CD4-positive, alpha-beta memory T cell (primary cell): ENCODE measurements at regions of chrX and their contacts with region 1.

Region 1: DNA sequence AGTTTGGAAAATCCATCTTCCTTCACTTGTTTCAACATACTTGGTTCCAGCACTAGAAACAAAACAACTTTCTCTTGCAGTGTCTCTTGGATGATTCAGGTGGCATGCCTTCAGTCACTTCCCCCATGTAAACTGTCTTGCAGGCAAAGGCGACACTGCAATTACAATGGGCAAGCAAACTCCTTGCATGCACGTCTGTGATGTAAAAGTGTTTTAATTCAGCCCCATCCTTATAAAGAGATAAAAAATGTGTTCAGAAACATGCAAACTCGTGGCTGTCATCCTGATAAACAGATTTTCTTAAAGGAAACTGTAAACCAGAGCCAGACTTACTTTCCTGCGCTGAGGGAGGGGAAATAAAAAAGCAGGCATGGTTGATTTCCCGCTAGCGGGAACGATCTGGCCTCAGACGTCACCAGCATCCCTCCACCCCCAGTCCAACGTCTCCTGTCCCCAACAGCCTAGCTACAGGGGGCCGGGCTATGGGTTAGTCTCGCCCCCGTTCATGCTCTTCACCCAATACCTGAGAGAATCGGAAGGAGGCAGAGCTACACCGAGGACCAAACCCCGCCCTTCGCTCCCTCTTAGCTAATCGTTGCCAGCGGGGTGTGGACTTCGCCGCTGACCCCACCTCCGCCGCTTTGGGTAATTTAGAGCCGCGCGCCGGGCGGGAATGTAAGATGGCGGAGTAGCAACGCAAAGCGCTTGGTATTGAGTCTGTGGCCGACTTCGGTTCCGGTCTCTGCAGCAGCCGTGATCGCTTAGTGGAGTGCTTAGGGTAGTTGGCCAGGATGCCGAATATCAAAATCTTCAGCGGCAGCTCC is at the start of gene PRPS1:
- DNase-seq: peak; percentile 84 to 93 (median 89)
- H3K4me3 ChIP-seq: peak within 1 kb of the TSS; percentile 79 to 86
- H3K4me3 Mint-ChIP-seq: peak within 1 kb of the TSS; percentile 85 to 99 (median 95)
- H3K27ac ChIP-seq: peak within 1 kb of the TSS; percentile 73
- H3K27ac Mint-ChIP-seq: peak within 1 kb of the TSS; percentile 94 to 96 (median 95)
- H3K4me1 ChIP-seq: peaks cover 31% of the 10 kb centered on the region
- H3K4me1 Mint-ChIP-seq: peaks cover 16 to 46% (median 29%) of the 10 kb centered on the region in 4 donors
- H3K27me3 ChIP-seq: no peaks in the 10 kb centered on the region
- H3K27me3 Mint-ChIP-seq: no peaks in the 10 kb centered on the region
- total RNA-seq, gene PRPS1: 56.1 to 61.3 TPM

Region 2: DNA sequence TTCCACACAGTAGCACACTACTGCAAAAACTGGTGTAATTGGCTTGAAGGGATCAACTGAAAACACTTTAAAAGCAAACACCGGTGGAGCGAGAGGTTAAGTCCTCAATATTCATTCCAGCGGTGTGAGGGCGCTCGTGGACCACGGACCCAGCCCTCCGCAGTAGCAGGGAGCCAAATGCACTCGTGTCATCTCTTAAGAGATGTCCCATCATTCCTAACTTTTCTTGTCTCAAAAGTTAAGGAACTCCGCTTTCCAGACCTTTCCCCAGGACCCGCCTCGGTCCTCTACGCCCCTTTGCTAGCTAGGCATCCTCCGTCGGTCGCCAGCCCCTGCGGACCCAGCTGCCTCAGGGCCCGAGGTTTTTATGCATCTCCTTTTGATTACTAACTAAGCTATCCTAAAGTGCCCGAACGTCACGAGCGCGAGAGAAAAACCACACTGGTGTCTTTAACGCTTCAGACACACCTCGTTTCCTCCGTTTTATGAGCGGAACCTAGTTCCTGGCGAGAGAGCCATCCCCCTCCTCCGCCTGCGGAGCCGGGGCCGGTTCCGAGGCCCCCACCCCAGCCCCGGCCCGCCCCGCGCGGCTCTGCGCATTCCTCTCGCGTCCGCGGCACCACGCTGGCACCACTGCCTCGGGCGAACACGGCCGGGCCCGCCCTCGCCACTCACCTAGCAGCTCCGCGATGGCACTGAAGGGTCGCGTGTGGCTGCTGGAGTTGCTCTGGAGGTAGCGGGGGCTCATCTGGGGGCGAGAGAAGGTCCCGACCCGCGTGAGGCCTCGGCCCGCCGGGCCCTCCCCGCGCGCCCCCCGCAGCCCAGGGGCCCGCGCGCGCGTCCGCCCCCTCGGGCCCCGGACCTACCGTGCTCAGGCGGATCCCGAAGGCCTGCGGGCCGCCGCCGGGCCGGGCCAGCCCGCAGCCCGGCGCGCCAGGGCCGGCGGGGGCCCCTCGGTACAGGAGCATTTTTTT is 628.8 kb before region 1 on chrX:
- CTCF ChIA-PET with region 1: interaction called, 4 read pairs
- POLR2A ChIA-PET with region 1: interaction called, 6 read pairs
- intact Hi-C with region 1: loop called (anchors 10 kb)
- DNase-seq: peak; percentile 46 to 55 (median 55)
- H3K4me3 ChIP-seq: peak overlapping the region; percentile 23 to 53
- H3K4me3 Mint-ChIP-seq: peak overlapping the region; percentile 81 to 95 (median 92)
- H3K27ac ChIP-seq: peak overlapping the region; percentile 34
- H3K27ac Mint-ChIP-seq: peak overlapping the region; percentile 71 to 93 (median 81)
- H3K4me1 ChIP-seq: peaks cover 10% of the 10 kb centered on the region
- H3K4me1 Mint-ChIP-seq: peaks cover 5 to 22% (median 13%) of the 10 kb centered on the region in 4 donors
- H3K27me3 ChIP-seq: no peaks in the 10 kb centered on the region
- H3K27me3 Mint-ChIP-seq: no peaks in the 10 kb centered on the region

Region 3: GRCh38 chrX:107448998-107449835 is 178.8 kb before region 1 on chrX and contains the start of gene FRMPD3:
- CTCF ChIA-PET with region 1: no interaction called
- POLR2A ChIA-PET with region 1: no interaction called
- intact Hi-C with region 1: no loop called
- DNase-seq: no peak
- H3K4me3 ChIP-seq: no peak within 1 kb of the TSS
- H3K4me3 Mint-ChIP-seq: peak within 1 kb of the TSS; percentile 61 to 89 (median 76)
- H3K27ac ChIP-seq: no peak within 1 kb of the TSS
- H3K27ac Mint-ChIP-seq: peak within 1 kb of the TSS in 1 of 7 donors; percentile 25
- H3K4me1 ChIP-seq: no peaks in the 10 kb centered on the region
- H3K4me1 Mint-ChIP-seq: peaks cover 8 to 20% (median 12%) of the 10 kb centered on the region in 4 donors
- H3K27me3 ChIP-seq: no peaks in the 10 kb centered on the region
- H3K27me3 Mint-ChIP-seq: peaks cover 16 to 21% of the 10 kb centered on the region in 2 donors
- total RNA-seq, gene FRMPD3: not detected

Region 4: DNA sequence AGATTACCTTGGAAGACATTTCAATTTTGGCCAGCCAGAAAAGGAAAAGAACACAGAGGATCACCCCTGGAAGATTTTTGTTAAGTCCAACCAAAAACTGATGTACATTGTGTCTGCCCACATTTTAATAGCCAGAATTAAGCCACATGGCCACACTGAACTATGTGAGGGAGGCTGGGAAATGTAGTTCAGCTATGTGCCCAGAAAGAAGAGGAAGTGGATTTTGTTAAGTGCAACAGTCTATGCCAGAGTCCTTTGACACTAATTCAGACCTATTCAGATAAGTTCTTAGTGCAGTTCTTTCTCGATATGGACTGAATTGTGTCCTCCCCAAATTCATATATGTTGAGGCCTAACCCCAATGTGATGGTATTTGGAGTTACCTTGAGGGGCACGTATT is 18.7 kb after region 1 on chrX:
- CTCF ChIA-PET with region 1: interaction called, 3 read pairs
- POLR2A ChIA-PET with region 1: interaction called, 12 read pairs
- intact Hi-C with region 1: no loop called
- DNase-seq: no peak
- H3K4me3 ChIP-seq: no peak overlapping the region
- H3K4me3 Mint-ChIP-seq: no peak overlapping the region
- H3K27ac ChIP-seq: no peak overlapping the region
- H3K27ac Mint-ChIP-seq: peak overlapping the region in 1 of 7 donors; percentile 18
- H3K4me1 ChIP-seq: no peaks in the 10 kb centered on the region
- H3K4me1 Mint-ChIP-seq: peaks cover 0 to 4% (median 0%) of the 10 kb centered on the region in 4 donors
- H3K27me3 ChIP-seq: no peaks in the 10 kb centered on the region
- H3K27me3 Mint-ChIP-seq: no peaks in the 10 kb centered on the region

Region 5: DNA sequence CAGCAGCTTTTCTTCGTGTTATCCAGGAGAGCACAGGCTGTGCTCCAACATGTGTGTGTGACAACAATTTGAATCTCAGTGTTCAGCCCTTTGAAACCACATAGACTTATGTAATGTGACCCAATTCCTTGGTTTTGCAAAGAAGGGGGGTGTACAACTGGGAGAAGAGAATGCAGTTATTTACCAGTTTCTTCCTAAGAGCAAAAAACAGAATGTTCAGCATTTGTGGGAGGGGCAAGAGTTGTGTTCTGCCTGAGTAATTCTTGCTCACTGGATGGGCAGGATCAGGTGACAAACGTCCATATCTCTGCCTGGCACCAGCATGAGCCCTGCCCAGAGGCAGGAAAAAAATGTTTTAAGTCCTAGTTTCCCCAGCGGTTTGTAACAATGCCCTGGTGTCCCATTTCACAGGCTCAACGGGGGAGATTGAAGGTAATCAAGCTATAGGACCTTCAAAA is 72.3 kb after region 1 on chrX:
- CTCF ChIA-PET with region 1: no interaction called
- POLR2A ChIA-PET with region 1: no interaction called
- intact Hi-C with region 1: no loop called
- DNase-seq: peak in 1 of 5 donors; percentile 19
- H3K4me3 ChIP-seq: no peak overlapping the region
- H3K4me3 Mint-ChIP-seq: peak overlapping the region in 1 of 8 donors; percentile 41
- H3K27ac ChIP-seq: no peak overlapping the region
- H3K27ac Mint-ChIP-seq: peak overlapping the region in 4 of 7 donors; percentile 17 to 86 (median 54)
- H3K4me1 ChIP-seq: peaks cover 21% of the 10 kb centered on the region
- H3K4me1 Mint-ChIP-seq: peaks cover 16 to 33% (median 26%) of the 10 kb centered on the region in 4 donors
- H3K27me3 ChIP-seq: no peaks in the 10 kb centered on the region
- H3K27me3 Mint-ChIP-seq: no peaks in the 10 kb centered on the region

Region 6: DNA sequence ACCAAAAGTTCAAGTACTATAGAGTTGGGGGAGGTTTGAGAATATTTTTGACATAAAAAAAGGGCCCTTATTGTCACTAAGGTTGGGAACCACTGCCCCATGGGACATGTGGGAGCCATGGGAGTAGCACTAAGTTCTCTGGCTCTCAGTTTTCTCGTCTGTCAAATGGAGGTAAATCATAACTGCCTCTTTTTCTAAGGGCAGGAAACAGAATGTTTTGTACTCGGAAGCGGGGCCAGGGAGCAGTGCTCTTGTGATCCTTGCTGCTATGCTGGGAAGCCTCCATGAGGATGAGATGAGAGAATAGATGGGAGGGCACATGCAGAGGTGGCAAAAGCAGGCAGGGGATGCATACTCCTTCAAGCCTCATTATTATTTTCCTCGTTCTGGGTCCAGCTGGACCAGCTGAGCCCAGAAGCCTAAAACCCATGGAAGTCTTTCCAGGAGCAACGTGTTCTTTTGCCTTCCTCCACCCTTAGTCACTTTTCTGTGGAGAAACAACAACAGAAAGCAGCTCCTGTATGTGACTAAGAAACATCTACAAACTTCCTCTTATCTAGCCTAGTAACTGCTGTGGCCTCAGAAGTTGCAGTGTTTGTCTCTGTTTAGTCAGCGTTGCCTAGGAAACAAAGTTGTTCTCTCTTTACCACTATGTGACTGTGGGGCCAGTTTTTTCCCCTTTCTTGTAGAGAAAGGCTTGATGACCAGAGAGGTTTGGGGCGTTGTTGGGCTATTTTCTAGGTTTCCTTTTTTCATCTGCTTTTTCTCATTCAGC is 82.8 kb after region 1 on chrX:
- CTCF ChIA-PET with region 1: no interaction called
- POLR2A ChIA-PET with region 1: interaction called, 36 read pairs
- intact Hi-C with region 1: no loop called
- DNase-seq: peak; percentile 89 to 93 (median 91)
- H3K4me3 ChIP-seq: peak overlapping the region; percentile 29 to 46
- H3K4me3 Mint-ChIP-seq: peak overlapping the region; percentile 75 to 96 (median 86)
- H3K27ac ChIP-seq: peak overlapping the region; percentile 95
- H3K27ac Mint-ChIP-seq: peak overlapping the region; percentile 99 to 100 (median 100)
- H3K4me1 ChIP-seq: peaks cover 65% of the 10 kb centered on the region
- H3K4me1 Mint-ChIP-seq: peaks cover 36 to 82% (median 60%) of the 10 kb centered on the region in 4 donors
- H3K27me3 ChIP-seq: no peaks in the 10 kb centered on the region
- H3K27me3 Mint-ChIP-seq: no peaks in the 10 kb centered on the region

Region 7: DNA sequence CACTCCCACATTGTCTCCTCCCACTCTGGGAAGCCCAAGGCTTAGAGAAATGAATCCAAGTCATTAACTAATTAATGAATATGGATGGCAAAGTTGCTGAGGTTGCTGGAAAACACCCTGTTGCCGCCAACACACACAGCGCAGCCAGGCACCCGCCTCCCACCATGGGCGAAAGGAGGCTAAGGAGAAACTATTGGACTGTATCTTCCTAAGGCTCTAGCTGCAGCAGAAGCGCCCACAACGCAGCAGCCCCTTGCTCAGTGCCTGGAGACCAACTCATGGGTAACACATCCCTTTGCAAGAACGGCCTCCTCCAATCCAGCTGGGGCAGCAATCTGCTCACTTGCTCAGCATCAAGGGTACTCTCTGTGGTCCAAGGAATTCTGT is 113.3 kb after region 1 on chrX:
- CTCF ChIA-PET with region 1: interaction called, 4 read pairs
- POLR2A ChIA-PET with region 1: interaction called, 14 read pairs
- intact Hi-C with region 1: loop called (anchors 1 kb)
- DNase-seq: peak in 1 of 5 donors; percentile 43
- H3K4me3 ChIP-seq: peak overlapping the region in 1 of 2 donors; percentile 41
- H3K4me3 Mint-ChIP-seq: peak overlapping the region; percentile 64 to 95 (median 85)
- H3K27ac ChIP-seq: peak overlapping the region; percentile 52
- H3K27ac Mint-ChIP-seq: peak overlapping the region; percentile 95 to 100 (median 98)
- H3K4me1 ChIP-seq: peaks cover 48% of the 10 kb centered on the region
- H3K4me1 Mint-ChIP-seq: peaks cover 23 to 49% (median 33%) of the 10 kb centered on the region in 4 donors
- H3K27me3 ChIP-seq: no peaks in the 10 kb centered on the region
- H3K27me3 Mint-ChIP-seq: peaks cover 0 to 4% of the 10 kb centered on the region in 2 donors